Heart left ventricle (tissue), 16 donors: ENCODE measurements at regions of chr12 and their contacts with region 1.

Region 1: GRCh38 chr12:21527451-21528180 is 1.5 kb downstream of the SPX start:
- DNase-seq: peak; percentile 51 to 82 (median 78)
- ATAC-seq: peak; percentile 88 to 95 (median 94)
- H3K4me3 ChIP-seq: peak overlapping the region; percentile 30 to 84 (median 70)
- H3K27ac ChIP-seq: peak overlapping the region; percentile 35 to 89 (median 80)
- H3K4me1 ChIP-seq: peaks cover 0 to 23% (median 5%) of the 10 kb centered on the region in 12 donors
- H3K27me3 ChIP-seq: peaks cover 0 to 42% (median 0%) of the 10 kb centered on the region in 9 donors
- CTCF ChIP-seq: peak in 3 of 12 donors; percentile 21 to 33 (median 24)
- POLR2A ChIP-seq: no peak

Region 2: GRCh38 chr12:21657326-21658077 is 129.9 kb after region 1 on chr12 and contains the start of gene LDHB:
- intact Hi-C with region 1: loop called in 3 of 10 experiments (anchors 10 kb)
- DNase-seq: peak; percentile 96 to 99 (median 97)
- ATAC-seq: peak; percentile 99 to 100 (median 99)
- H3K4me3 ChIP-seq: peak within 1 kb of the TSS; percentile 56 to 95 (median 82)
- H3K27ac ChIP-seq: peak within 1 kb of the TSS; percentile 52 to 99 (median 94)
- H3K4me1 ChIP-seq: peaks cover 0 to 44% (median 23%) of the 10 kb centered on the region in 12 donors
- H3K27me3 ChIP-seq: no peaks in the 10 kb centered on the region
- CTCF ChIP-seq: no peak
- POLR2A ChIP-seq: peak; percentile 78 to 96
- total RNA-seq, gene LDHB: 1,099 to 3,071 (median 2,267) TPM